Endothelial cell of umbilical vein (primary cell): ENCODE measurements at regions of chr20 and their contacts with region 1.

Region 1: DNA sequence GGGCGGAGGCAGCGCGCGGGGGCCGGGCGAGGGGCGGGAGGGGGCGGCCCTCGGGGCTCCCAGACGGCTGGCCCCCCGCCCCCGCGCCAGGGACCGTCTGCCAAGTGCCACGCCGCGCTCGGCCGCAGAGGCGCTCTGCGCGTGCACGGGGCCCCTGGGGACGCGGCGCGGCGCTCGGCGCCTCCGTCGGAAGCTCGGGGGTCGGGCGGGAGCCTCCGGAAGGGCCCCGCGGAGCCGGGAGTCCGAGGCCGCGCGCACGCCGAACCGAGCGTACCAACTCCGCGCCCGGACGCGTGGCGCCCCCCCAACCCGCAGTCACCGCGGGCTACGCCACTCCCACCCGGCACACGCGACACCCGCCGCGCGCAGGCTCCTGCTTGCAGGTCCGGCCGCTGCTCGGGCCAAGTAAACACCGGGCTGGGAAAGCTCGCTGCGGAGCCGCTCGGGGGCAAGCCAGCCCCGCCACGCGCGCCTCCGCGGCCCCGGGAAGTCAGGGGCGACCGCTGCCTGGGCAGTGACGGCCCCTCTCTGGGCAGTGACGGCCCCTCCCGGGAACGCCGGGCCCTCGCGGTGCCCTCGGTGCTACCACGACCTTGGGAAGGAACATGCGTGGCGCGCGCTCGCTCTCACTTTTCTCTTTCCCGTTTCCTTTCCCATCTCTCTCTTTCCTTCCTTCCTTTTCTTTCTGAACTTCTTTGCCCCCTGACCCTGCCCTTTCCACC is 384 bp upstream of the PREX1 start:
- DNase-seq: peak; percentile 81
- H3K4me3 ChIP-seq: peak overlapping the region; percentile 14 to 92 (median 26)
- H3K27ac ChIP-seq: peak overlapping the region; percentile 47
- H3K4me1 ChIP-seq: peaks cover 45% of the 10 kb centered on the region
- H3K27me3 ChIP-seq: no peaks in the 10 kb centered on the region
- CTCF ChIP-seq: no peak
- POLR2A ChIP-seq: peak; percentile 83

Region 2: GRCh38 chr20:48635433-48636310 is 192.5 kb before region 1 on chr20:
- CTCF ChIA-PET with region 1: no interaction called
- POLR2A ChIA-PET with region 1: no interaction called
- dilution Hi-C with region 1: no loop called
- intact Hi-C with region 1: loop called (anchors 1 kb)
- DNase-seq: peak; percentile 55
- H3K4me3 ChIP-seq: no peak overlapping the region
- H3K27ac ChIP-seq: no peak overlapping the region
- H3K4me1 ChIP-seq: peaks cover 23% of the 10 kb centered on the region
- H3K27me3 ChIP-seq: no peaks in the 10 kb centered on the region
- CTCF ChIP-seq: peak; percentile 96 to 97
- POLR2A ChIP-seq: no peak

Region 3: DNA sequence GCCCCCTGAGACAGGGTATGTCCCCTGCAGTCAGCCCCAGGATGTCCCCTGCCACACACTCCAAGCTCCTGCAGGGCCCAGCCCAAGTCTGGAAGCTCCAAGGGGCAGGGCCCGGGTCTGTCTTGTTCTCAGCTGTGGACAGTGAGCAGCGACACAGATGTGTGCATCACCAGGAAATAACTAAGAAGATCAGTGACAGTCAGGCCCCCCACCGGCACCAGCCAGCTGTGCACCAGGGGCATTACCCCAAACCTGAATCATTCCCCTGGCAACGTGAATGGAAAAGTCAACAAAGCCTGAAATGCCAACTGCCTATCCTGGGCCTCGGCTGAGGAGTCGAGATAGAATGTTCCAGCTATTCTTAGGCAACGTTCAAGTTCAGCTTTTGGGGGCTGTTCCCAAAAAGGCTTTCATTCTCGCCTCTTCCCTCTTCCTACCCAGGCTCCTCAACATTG is 105.4 kb before region 1 on chr20:
- CTCF ChIA-PET with region 1: no interaction called
- POLR2A ChIA-PET with region 1: no interaction called
- dilution Hi-C with region 1: no loop called
- intact Hi-C with region 1: loop called (anchors 2 kb)
- DNase-seq: peak; percentile 33
- H3K4me3 ChIP-seq: no peak overlapping the region
- H3K27ac ChIP-seq: peak overlapping the region; percentile 90
- H3K4me1 ChIP-seq: peaks cover 42% of the 10 kb centered on the region
- H3K27me3 ChIP-seq: no peaks in the 10 kb centered on the region
- CTCF ChIP-seq: no peak
- POLR2A ChIP-seq: no peak

Region 4: DNA sequence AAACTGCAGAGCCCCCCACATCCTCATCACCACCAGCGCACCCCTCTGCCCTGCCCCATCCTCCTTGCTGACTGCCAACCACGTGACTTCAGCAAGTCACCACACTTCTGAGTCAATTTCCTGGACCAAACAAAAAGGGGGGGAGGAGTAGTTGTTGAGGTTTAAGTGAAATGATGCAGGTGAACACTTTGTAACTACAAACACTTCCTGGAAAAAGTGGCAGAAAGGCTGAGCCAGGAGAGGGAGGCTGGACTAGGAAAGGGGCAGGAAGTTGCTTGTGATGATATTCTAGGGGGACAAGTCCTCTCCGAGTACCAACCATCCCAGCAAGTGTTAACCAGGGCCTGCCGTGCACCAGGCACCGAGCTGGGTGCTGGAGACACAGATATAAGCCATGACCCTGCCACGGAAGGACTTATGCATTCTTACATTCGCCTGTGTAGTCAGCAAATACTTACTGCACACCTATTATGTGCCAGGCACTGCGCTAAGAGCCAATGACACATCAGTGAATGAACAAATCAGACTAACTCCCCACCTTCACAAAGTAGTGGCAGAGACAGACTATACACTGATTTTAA is 67.7 kb before region 1 on chr20:
- CTCF ChIA-PET with region 1: no interaction called
- POLR2A ChIA-PET with region 1: no interaction called
- dilution Hi-C with region 1: no loop called
- intact Hi-C with region 1: loop called (anchors 1 kb)
- DNase-seq: peak; percentile 84
- H3K4me3 ChIP-seq: no peak overlapping the region
- H3K27ac ChIP-seq: peak overlapping the region; percentile 80
- H3K4me1 ChIP-seq: peaks cover 47% of the 10 kb centered on the region
- H3K27me3 ChIP-seq: no peaks in the 10 kb centered on the region
- CTCF ChIP-seq: no peak
- POLR2A ChIP-seq: no peak

Region 5: GRCh38 chr20:48904365-48905296 is 76.4 kb after region 1 on chr20:
- CTCF ChIA-PET with region 1: interaction called, 27 read pairs
- POLR2A ChIA-PET with region 1: interaction called, 3 read pairs
- dilution Hi-C with region 1: no loop called
- intact Hi-C with region 1: loop called (anchors 1 kb)
- DNase-seq: peak; percentile 76
- H3K4me3 ChIP-seq: no peak overlapping the region
- H3K27ac ChIP-seq: no peak overlapping the region
- H3K4me1 ChIP-seq: peaks cover 14% of the 10 kb centered on the region
- H3K27me3 ChIP-seq: no peaks in the 10 kb centered on the region
- CTCF ChIP-seq: peak; percentile 69 to 76
- POLR2A ChIP-seq: no peak